Gastrocnemius medialis (tissue), 4 donors: ENCODE measurements at regions of chr6 and their contacts with region 1.

Region 1: DNA sequence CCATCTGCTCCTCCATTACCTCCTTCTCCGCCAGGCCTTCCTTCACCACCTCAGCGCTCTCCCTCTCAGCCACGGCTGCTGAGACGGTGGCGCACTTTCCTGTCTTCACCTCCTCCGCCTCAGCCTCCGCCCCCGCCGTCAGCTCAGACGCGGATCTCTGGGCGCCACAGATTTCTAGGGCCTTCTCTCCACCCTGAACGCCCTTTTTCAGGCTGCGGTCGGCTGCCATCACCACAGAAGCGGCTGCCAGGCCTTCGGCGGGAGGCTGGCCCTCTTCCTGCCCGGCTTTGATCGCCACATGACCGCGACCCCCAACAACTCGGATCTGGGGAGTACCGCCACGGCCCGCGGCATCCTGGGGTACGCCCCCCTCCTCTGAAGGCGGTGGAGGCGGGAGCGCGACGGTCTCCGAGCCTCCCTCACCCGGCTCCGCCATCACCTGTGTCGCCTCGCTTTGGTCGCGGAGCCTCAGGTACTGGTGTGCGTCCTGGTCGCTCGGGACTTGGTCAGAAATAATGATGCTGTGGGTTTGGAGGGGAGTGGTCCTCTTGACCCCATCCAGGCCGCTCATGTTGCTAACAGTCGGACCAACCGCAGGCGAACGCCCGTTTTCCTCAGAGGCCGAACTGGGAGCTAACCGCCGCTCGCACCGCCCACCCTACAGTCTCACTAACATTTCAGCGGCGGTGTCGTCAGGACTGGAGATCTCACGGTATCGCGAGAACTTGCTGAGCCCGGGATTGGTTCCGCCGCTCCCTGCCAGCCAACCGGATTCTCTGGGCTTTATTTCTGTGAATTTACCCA is at the start of gene TSPYL1:
- DNase-seq: peak; percentile 93 to 94
- ATAC-seq: peak; percentile 98
- H3K4me3 ChIP-seq: peak within 1 kb of the TSS; percentile 69 to 99 (median 86)
- H3K27ac ChIP-seq: peak within 1 kb of the TSS; percentile 90 to 99 (median 96)
- H3K4me1 ChIP-seq: peaks cover 54 to 59% of the 10 kb centered on the region in 2 donors
- H3K27me3 ChIP-seq: no peaks in the 10 kb centered on the region
- CTCF ChIP-seq: peak in 1 of 5 experiments; percentile 9
- POLR2A ChIP-seq: peak; percentile 92 to 96
- total RNA-seq, gene TSPYL1: 74.2 to 160 (median 81.2) TPM

Region 2: GRCh38 chr6:116100419-116101301 is 178.8 kb before region 1 on chr6 and contains the start of gene NT5DC1:
- in situ Hi-C with region 1: no loop called
- intact Hi-C with region 1: loop called (anchors 1 kb)
- DNase-seq: peak; percentile 69 to 77
- ATAC-seq: peak; percentile 93 to 94
- H3K4me3 ChIP-seq: peak within 1 kb of the TSS; percentile 60 to 85 (median 72)
- H3K27ac ChIP-seq: peak within 1 kb of the TSS; percentile 86 to 96 (median 90)
- H3K4me1 ChIP-seq: peaks cover 41 to 48% of the 10 kb centered on the region in 2 donors
- H3K27me3 ChIP-seq: no peaks in the 10 kb centered on the region
- CTCF ChIP-seq: peak; percentile 35 to 60 (median 50)
- POLR2A ChIP-seq: peak; percentile 47 to 64
- total RNA-seq, gene NT5DC1: 7.0 to 15.4 (median 12.0) TPM

Region 3: GRCh38 chr6:116371120-116371917 is 91.9 kb after region 1 on chr6:
- in situ Hi-C with region 1: no loop called
- intact Hi-C with region 1: loop called (anchors 5 kb)
- DNase-seq: peak; percentile 45 to 67
- ATAC-seq: peak; percentile 62 to 70
- H3K4me3 ChIP-seq: peak overlapping the region; percentile 80 to 89 (median 88)
- H3K27ac ChIP-seq: peak overlapping the region; percentile 86 to 91 (median 89)
- H3K4me1 ChIP-seq: peaks cover 4 to 18% of the 10 kb centered on the region in 2 donors
- H3K27me3 ChIP-seq: no peaks in the 10 kb centered on the region
- CTCF ChIP-seq: no peak
- POLR2A ChIP-seq: peak in 1 of 2 donors; percentile 25

Region 4: DNA sequence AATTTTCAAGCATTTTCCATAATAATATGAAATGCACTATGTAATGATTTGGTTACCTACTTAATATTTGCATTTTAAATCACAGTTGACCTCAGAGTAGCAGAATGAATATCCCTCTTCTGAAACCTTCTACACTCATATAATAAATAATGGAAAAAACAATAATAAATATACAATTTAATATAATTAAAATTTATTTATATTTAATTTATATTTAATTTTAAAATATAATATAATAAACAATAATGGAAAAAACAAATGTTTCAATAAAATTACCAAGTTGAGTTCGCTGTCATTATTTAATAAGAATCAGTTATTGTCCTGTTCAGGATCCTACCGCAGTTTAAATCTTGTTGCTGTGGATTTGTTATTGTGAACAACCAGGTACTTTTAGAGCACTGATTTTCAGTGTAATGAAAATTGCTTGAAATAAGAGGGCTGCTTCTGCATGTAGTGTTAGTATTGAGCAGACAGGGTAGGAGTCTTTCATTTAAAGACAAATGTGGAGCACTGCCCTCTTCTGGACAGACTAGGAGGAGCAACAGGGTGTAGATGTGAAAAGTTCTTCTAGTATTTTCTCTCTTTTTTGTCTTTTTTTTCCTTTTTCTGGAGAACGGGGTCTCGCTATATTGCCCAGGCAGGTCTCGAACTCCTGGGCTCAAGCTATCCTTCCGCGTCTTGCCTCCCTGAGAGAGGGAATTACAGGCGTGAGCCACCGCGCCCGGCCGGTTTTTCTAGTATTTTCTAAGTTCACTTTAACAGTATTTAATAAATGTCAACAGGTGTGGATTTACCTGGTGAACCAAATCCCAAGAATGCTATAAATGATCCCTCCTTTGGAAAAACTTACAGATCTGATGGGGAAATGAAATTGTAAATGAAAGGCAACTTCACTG is 252.5 kb after region 1 on chr6:
- in situ Hi-C with region 1: loop called in 3 of 4 experiments (anchors 10 to 25 kb)
- intact Hi-C with region 1: no loop called
- DNase-seq: peak; percentile 4 to 25
- ATAC-seq: peak; percentile 82 to 89
- H3K4me3 ChIP-seq: no peak overlapping the region
- H3K27ac ChIP-seq: no peak overlapping the region
- H3K4me1 ChIP-seq: peaks cover 0 to 8% of the 10 kb centered on the region in 2 donors
- H3K27me3 ChIP-seq: no peaks in the 10 kb centered on the region
- CTCF ChIP-seq: peak; percentile 70 to 86 (median 73)
- POLR2A ChIP-seq: no peak

Region 5: DNA sequence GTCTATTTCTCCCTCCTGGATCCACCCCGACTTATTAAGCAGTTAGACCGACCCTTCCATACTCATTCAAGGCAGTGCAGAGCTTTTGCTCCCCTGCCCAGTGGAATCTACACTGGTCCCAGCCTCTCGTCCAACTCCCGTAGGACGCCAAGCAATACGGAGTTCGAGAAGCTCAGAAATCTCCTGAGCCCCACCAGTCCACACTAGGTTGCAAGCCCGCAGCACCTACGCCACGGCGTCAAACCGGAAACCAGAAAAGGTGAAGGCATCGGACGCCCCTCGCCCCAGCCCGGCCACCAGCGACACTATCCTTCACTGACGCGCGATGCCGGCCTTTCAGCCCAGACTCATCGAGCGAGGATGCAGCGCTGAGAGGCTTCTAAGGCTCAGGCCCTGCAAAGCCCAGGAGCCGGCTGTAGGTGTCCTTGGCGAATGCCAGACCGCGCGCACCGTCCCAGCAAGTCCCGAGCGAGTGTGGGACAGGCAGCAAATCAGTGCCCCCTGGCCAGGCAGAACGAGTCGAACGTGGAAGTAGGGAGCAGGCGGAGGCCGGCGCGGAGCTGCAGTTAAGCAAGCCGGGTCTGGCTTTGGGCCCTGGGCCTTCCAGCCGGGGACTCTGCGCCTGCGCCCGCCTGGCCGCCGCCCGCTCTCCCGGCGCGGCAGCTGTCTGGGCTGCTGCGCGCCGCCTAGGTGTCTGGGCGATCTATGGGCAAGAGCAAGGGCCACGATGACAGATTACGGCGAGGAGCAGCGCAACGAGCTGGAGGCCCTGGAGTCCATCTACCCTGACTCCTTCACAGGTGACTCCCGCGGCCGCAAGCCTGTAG is 291.6 kb after region 1 on chr6 and contains the start of gene RWDD1:
- in situ Hi-C with region 1: loop called in 1 of 4 experiments (anchors 10 kb)
- intact Hi-C with region 1: loop called (anchors 2 kb)
- DNase-seq: peak; percentile 99
- ATAC-seq: peak; percentile 96 to 98
- H3K4me3 ChIP-seq: peak within 1 kb of the TSS; percentile 77 to 92 (median 86)
- H3K27ac ChIP-seq: peak within 1 kb of the TSS; percentile 88 to 94 (median 91)
- H3K4me1 ChIP-seq: peaks cover 41 to 43% of the 10 kb centered on the region in 2 donors
- H3K27me3 ChIP-seq: no peaks in the 10 kb centered on the region
- CTCF ChIP-seq: peak in 4 of 5 experiments; percentile 16 to 33 (median 24)
- POLR2A ChIP-seq: peak; percentile 76 to 77
- total RNA-seq, gene RWDD1: 42.1 to 63.8 (median 51.2) TPM